ENCODE measurements at regions of chr1 and their contacts with region 1.

Region 1: GRCh38 chr1:27044613-27045151 is 32.0 kb upstream of the TENT5B start:
- DNase-seq: peak; percentile 72 to 82 (median 78)
- H3K4me3 ChIP-seq: peak overlapping the region in 4 of 7 experiments; percentile 15 to 66 (median 55)
- H3K27ac ChIP-seq: no peak overlapping the region
- H3K4me1 ChIP-seq: peaks cover 0 to 18% (median 12%) of the 10 kb centered on the region in 4 experiments
- H3K27me3 ChIP-seq: no peaks in the 10 kb centered on the region

Region 2: GRCh38 chr1:26978901-26979300 is 65.8 kb before region 1 on chr1:
- CTCF ChIA-PET with region 1: no interaction called
- POLR2A ChIA-PET with region 1: no interaction called
- DNase-seq: no peak
- H3K4me3 ChIP-seq: no peak overlapping the region
- H3K27ac ChIP-seq: no peak overlapping the region
- H3K4me1 ChIP-seq: no peaks in the 10 kb centered on the region
- H3K27me3 ChIP-seq: peaks cover 0 to 2% (median 0%) of the 10 kb centered on the region in 5 experiments

Region 3: GRCh38 chr1:27021354-27022031 is 23.2 kb before region 1 on chr1:
- CTCF ChIA-PET with region 1: interaction called, 20 read pairs
- POLR2A ChIA-PET with region 1: no interaction called
- DNase-seq: no peak
- H3K4me3 ChIP-seq: no peak overlapping the region
- H3K27ac ChIP-seq: no peak overlapping the region
- H3K4me1 ChIP-seq: no peaks in the 10 kb centered on the region
- H3K27me3 ChIP-seq: no peaks in the 10 kb centered on the region

Region 4: GRCh38 chr1:27033043-27033746 is 11.5 kb before region 1 on chr1:
- CTCF ChIA-PET with region 1: interaction called, 20 read pairs
- POLR2A ChIA-PET with region 1: no interaction called
- DNase-seq: no peak
- H3K4me3 ChIP-seq: no peak overlapping the region
- H3K27ac ChIP-seq: no peak overlapping the region
- H3K4me1 ChIP-seq: peaks cover 0 to 9% (median 8%) of the 10 kb centered on the region in 4 experiments
- H3K27me3 ChIP-seq: no peaks in the 10 kb centered on the region

Region 5: DNA sequence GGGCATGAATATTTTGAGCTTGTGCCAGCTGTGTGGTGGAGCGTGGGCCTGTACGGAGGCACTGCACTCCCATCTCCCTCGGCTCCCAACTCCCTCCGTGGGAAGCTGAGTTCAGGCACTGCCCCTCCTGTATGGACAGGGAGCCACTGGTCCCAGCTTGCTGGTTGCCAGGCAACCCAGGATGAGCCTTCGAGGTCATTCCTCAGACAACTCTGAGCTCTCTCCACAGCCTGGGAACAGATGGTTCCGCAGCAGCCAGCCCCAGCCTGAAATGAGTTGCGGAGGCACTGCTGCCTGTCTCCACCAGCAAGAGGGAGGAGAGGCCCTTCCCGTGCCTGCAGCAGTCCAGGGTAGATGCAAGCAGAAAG is 26.4 kb after region 1 on chr1:
- CTCF ChIA-PET with region 1: interaction called, 26 read pairs
- POLR2A ChIA-PET with region 1: no interaction called
- DNase-seq: no peak
- H3K4me3 ChIP-seq: no peak overlapping the region
- H3K27ac ChIP-seq: no peak overlapping the region
- H3K4me1 ChIP-seq: peaks cover 0 to 8% (median 5%) of the 10 kb centered on the region in 4 experiments
- H3K27me3 ChIP-seq: peaks cover 0 to 2% (median 0%) of the 10 kb centered on the region in 5 experiments

Region 6: DNA sequence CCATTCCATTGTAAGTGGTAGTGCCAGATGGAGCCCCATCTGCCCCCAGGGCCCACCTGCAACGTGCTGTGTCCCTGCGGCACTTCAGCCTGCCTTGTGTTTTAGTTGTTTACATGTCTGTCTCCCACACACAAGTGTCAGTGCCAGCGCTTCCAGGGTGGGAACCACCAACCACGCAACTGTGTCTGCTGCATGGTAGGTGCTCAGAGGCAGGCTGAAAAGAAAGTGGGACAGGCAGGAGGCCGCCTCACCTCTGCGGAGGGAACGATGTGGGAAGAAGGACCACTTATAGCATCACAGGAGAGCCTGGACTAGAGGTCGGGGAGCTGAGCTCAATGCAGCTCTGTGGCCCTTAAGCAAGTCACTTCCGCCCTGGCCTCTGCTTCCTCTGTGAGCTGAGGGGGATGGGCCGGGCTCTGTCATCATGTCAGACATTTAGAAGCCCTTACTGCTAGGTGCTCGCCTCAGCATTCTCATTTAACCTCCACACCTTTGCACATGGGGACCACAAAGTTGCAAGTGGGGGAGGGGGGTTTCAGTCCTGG is 92.4 kb after region 1 on chr1:
- CTCF ChIA-PET with region 1: no interaction called
- POLR2A ChIA-PET with region 1: no interaction called
- DNase-seq: peak; percentile 59 to 87 (median 81)
- H3K4me3 ChIP-seq: peak overlapping the region in 4 of 7 experiments; percentile 3 to 49 (median 30)
- H3K27ac ChIP-seq: peak overlapping the region; percentile 2 to 76
- H3K4me1 ChIP-seq: peaks cover 9 to 50% (median 40%) of the 10 kb centered on the region in 4 experiments
- H3K27me3 ChIP-seq: no peaks in the 10 kb centered on the region

Region 7: GRCh38 chr1:27203946-27204345 is 159.3 kb after region 1 on chr1:
- CTCF ChIA-PET with region 1: no interaction called
- POLR2A ChIA-PET with region 1: no interaction called
- DNase-seq: no peak
- H3K4me3 ChIP-seq: no peak overlapping the region
- H3K27ac ChIP-seq: no peak overlapping the region
- H3K4me1 ChIP-seq: peaks cover 0 to 3% (median 0%) of the 10 kb centered on the region in 4 experiments
- H3K27me3 ChIP-seq: no peaks in the 10 kb centered on the region

Region 8: GRCh38 chr1:27589841-27590426 is 545.3 kb after region 1 on chr1:
- CTCF ChIA-PET with region 1: no interaction called
- POLR2A ChIA-PET with region 1: no interaction called
- DNase-seq: no peak
- H3K4me3 ChIP-seq: no peak overlapping the region
- H3K27ac ChIP-seq: peak overlapping the region in 1 of 2 experiments; percentile 3
- H3K4me1 ChIP-seq: peaks cover 0 to 46% (median 36%) of the 10 kb centered on the region in 4 experiments
- H3K27me3 ChIP-seq: no peaks in the 10 kb centered on the region